ENCODE measurements at regions of chr2 and their contacts with region 1.

Region 1: GRCh38 chr2:207529330-207530159 is at the start of gene CREB1:
- DNase-seq: peak; percentile 100
- ATAC-seq: peak; percentile 89
- H3K4me3 Mint-ChIP-seq: peak within 1 kb of the TSS; percentile 98
- H3K27ac Mint-ChIP-seq: peak within 1 kb of the TSS; percentile 100
- H3K4me1 Mint-ChIP-seq: peaks cover 57% of the 10 kb centered on the region
- H3K27me3 Mint-ChIP-seq: no peaks in the 10 kb centered on the region
- total RNA-seq, gene CREB1: 85.4 to 136 TPM

Region 2: GRCh38 chr2:206159346-206160124 is 1370.0 kb before region 1 on chr2 and contains the starts of genes EEF1B2 and NDUFS1:
- CTCF ChIA-PET with region 1: no interaction called
- POLR2A ChIA-PET with region 1: no interaction called
- intact Hi-C with region 1: loop called in 1 of 2 experiments (anchors 2 kb)
- DNase-seq: peak; percentile 99
- ATAC-seq: peak; percentile 95
- H3K4me3 Mint-ChIP-seq: peak within 1 kb of the TSS; percentile 97
- H3K27ac Mint-ChIP-seq: peak within 1 kb of the TSS; percentile 89
- H3K4me1 Mint-ChIP-seq: peaks cover 46% of the 10 kb centered on the region
- H3K27me3 Mint-ChIP-seq: no peaks in the 10 kb centered on the region
- total RNA-seq, gene EEF1B2: 983 to 1,166 TPM
- total RNA-seq, gene NDUFS1: 70.6 to 90.4 TPM

Region 3: GRCh38 chr2:207334624-207335371 is 194.7 kb before region 1 on chr2:
- CTCF ChIA-PET with region 1: no interaction called
- POLR2A ChIA-PET with region 1: interaction called, 3 read pairs
- intact Hi-C with region 1: loop called in 1 of 2 experiments (anchors 2 kb)
- DNase-seq: peak; percentile 69
- ATAC-seq: peak; percentile 20
- H3K4me3 Mint-ChIP-seq: peak overlapping the region; percentile 48
- H3K27ac Mint-ChIP-seq: peak overlapping the region; percentile 94
- H3K4me1 Mint-ChIP-seq: peaks cover 78% of the 10 kb centered on the region
- H3K27me3 Mint-ChIP-seq: no peaks in the 10 kb centered on the region

Region 4: DNA sequence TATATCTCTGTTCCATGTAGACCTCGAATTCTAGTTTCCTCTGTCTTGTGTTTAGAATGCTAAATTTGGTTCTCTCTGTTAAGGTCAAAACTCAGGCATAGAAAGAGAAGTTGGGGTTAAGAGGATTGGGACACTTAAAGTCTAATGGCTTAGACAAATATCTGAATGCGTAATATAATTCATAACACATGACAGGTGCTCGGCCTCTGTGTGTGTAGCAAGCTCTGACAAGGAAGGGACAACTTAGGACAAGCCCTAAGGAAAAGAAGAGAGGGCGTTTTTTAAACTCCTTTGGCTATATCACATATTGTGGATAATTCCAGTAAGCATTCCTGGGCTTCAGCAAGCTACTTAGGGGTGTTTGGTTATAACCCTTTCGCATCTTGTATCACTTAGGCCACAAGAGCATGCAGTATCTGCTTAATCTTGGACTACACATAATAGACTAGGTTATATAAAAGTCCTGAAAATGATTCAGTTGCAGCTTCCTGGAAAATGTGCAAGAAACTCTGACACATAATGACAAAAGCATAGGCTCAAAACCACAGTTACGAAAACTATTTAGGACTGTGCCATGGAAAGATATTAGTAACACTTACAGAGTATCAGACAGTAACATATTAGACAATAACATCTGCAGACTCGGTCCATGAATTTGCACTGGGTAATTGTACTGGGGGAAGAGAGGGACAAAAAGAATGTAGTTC is 15.8 kb before region 1 on chr2:
- CTCF ChIA-PET with region 1: interaction called, 3 read pairs
- POLR2A ChIA-PET with region 1: interaction called, 8 read pairs
- intact Hi-C with region 1: loop called (anchors 1 kb)
- DNase-seq: no peak
- ATAC-seq: peak; percentile 65
- H3K4me3 Mint-ChIP-seq: peak overlapping the region; percentile 19
- H3K27ac Mint-ChIP-seq: peak overlapping the region; percentile 49
- H3K4me1 Mint-ChIP-seq: peaks cover 41% of the 10 kb centered on the region
- H3K27me3 Mint-ChIP-seq: no peaks in the 10 kb centered on the region

Region 5: GRCh38 chr2:207769597-207770486 is 240.3 kb after region 1 on chr2 and contains the start of gene FZD5:
- CTCF ChIA-PET with region 1: no interaction called
- POLR2A ChIA-PET with region 1: no interaction called
- intact Hi-C with region 1: loop called in 1 of 2 experiments (anchors 2 kb)
- DNase-seq: peak; percentile 90
- ATAC-seq: peak; percentile 83
- H3K4me3 Mint-ChIP-seq: peak within 1 kb of the TSS; percentile 79
- H3K27ac Mint-ChIP-seq: no peak within 1 kb of the TSS
- H3K4me1 Mint-ChIP-seq: peaks cover 27% of the 10 kb centered on the region
- H3K27me3 Mint-ChIP-seq: peaks cover 41% of the 10 kb centered on the region
- total RNA-seq, gene FZD5: 1.1 to 1.3 TPM

Region 6: DNA sequence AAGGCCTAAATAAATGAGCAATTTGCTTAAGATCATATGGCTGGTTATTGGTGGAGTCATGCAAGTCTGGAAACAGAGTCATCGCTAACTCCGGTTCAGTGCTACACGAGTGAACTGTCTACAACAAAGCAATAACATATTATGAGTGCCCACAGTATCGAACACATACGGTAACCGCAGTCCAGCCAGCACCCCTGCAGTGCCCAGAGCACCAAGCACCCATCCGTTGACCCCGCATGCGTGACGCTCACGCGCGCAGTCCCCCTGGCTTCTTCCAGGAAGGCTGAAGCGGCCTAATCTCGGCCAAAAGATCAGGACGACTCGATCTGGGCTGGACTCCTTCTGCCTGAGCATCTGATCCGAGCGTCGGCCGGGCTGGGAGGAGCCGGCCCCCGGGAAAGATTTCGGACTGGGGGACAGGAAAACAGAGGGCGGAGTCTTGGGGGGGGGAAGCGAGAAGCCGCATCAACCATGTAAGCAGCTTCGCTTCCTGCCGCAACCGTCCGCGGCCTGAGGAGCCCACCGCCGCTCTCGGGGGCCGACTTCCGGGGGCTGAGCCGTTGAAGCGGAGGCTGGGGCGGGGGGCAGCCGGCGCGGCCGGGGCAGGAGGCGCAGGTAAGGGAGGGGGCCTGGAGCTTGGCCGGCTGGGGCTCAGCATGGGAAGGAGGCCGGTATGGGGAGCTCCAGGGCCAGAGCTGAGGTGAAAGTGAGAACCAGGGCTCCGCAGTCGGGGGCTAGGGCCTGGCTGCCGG is 736.4 kb after region 1 on chr2 and contains the start of gene PIKFYVE:
- CTCF ChIA-PET with region 1: no interaction called
- POLR2A ChIA-PET with region 1: no interaction called
- intact Hi-C with region 1: loop called (anchors 1 to 2 kb)
- DNase-seq: peak; percentile 94
- ATAC-seq: peak; percentile 84
- H3K4me3 Mint-ChIP-seq: peak within 1 kb of the TSS; percentile 84
- H3K27ac Mint-ChIP-seq: peak within 1 kb of the TSS; percentile 94
- H3K4me1 Mint-ChIP-seq: peaks cover 33% of the 10 kb centered on the region
- H3K27me3 Mint-ChIP-seq: no peaks in the 10 kb centered on the region
- total RNA-seq, gene PIKFYVE: 19.3 to 21.5 TPM